ENCODE measurements at regions of chr5 and their contacts with region 1.

Region 1: DNA sequence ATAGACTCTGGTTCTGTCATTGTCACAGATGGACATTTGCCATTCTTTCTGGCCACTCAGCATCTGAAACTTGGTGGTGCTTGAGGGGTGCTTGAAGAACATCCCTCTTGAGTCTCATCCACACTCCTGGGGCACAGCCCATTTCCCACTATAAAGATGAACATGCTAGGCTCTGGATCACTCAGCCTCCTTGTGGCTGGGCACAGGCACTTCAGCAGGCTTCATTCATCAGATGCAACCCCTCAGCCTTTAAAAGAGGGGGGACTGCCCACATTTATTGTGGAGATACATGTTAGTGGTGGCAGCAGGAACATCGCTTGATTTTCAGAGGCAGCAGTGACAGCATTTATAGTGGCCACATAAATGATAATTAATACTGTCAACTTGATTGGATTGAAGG is 124.7 kb upstream of the NIPBL start:
- DNase-seq: no peak
- H3K4me3 ChIP-seq: no peak overlapping the region
- CTCF ChIP-seq: peak; percentile 30

Region 2: GRCh38 chr5:36397901-36398536 is 353.9 kb before region 1 on chr5:
- in situ Hi-C with region 1: no loop called
- DNase-seq: peak; percentile 61
- H3K4me3 ChIP-seq: no peak overlapping the region
- CTCF ChIP-seq: peak; percentile 51

Region 3: GRCh38 chr5:36712706-36713105 is 39.2 kb before region 1 on chr5:
- in situ Hi-C with region 1: no loop called
- DNase-seq: no peak
- H3K4me3 ChIP-seq: no peak overlapping the region
- CTCF ChIP-seq: no peak

Region 4: GRCh38 chr5:36790838-36791237 is 39.0 kb after region 1 on chr5:
- in situ Hi-C with region 1: no loop called
- DNase-seq: no peak
- H3K4me3 ChIP-seq: no peak overlapping the region
- CTCF ChIP-seq: no peak

Region 5: DNA sequence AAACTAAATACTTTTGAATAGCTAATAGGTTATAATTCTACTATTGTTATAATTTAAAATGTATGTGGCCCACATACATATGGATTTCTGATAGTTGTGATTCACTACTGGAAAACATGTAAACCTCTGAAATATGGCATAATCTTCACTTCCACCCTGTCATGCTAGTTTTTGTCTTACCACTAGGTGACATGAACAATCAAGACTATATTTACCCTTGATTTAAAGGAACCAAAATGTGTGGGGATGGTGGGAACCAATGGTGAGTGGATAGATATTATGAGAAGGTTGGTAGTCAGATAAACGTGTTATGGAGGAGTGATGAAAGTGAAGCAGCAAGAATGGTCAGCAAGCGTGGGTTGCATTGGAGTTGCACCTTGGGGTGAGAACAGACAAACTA is 114.3 kb after region 1 on chr5:
- in situ Hi-C with region 1: loop called (anchors 10 kb)
- DNase-seq: no peak
- H3K4me3 ChIP-seq: no peak overlapping the region
- CTCF ChIP-seq: no peak

Measured in astrocyte of the cerebellum (primary cell).